H1 (cell line): ENCODE measurements at regions of chr12 and their contacts with region 1.

Region 1: GRCh38 chr12:48957141-48958048 is at the start of gene ARF3:
- DNase-seq: peak; percentile 82 to 96
- H3K4me3 ChIP-seq: peak within 1 kb of the TSS; percentile 93 to 97 (median 94)
- H3K27ac ChIP-seq: peak within 1 kb of the TSS; percentile 86
- H3K4me1 ChIP-seq: peaks cover 5 to 14% (median 8%) of the 10 kb centered on the region in 4 experiments; a peak in 6 of 7 replicates
- H3K27me3 ChIP-seq: no peaks in the 10 kb centered on the region
- CTCF ChIP-seq: no peak
- EP300 ChIP-seq: peak in 1 of 2 experiments; percentile 58; a peak in 1 of 3 replicates
- POLR2A ChIP-seq: peak; percentile 56 to 60; a peak in 2 of 3 replicates
- RAD21 ChIP-seq: no peak
- total RNA-seq, gene ARF3: 250 and 251 TPM in 2 replicates

Region 2: DNA sequence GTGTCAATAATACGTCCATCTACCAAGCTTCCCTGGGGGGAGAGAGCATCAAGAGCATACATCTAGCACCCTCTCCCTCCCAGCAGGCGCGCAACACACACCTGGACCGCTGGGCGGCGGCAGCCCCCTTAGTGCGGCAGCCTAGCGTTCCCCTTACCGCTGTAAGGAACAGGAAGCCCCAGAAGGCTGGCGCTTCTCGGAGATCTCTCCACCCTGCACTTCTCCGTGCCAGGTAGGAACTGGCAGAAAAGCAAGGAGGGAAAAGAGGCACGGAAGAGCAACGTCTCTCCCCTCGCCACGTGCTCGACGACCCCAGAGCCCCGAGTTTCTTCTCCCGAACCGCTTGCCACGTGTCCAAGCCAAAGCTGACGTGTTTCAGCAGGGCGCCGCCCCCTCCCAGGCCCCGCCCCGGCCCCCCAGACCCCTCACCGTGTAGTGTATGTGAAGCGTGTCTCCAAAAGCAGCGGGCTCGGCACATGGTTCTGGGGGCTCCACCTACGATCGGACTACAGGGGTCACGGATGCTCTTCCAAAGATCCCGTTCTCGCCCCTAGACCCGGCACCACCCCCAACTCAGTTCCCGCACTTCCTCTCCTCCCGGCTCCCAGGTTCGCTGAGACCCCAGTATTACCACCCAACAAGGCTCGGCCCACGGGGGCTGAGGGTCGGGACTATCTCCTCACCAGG is 32.6 kb before region 1 on chr12:
- CTCF ChIA-PET with region 1: interaction called, 280 read pairs
- POLR2A ChIA-PET with region 1: interaction called, 10 read pairs
- DNase-seq: peak; percentile 29 to 79
- H3K4me3 ChIP-seq: peak overlapping the region; percentile 61 to 86 (median 70)
- H3K27ac ChIP-seq: peak overlapping the region; percentile 55
- H3K4me1 ChIP-seq: peaks cover 0 to 14% (median 4%) of the 10 kb centered on the region in 4 experiments; a peak in 4 of 7 replicates
- H3K27me3 ChIP-seq: no peaks in the 10 kb centered on the region; a peak in 1 of 7 replicates
- CTCF ChIP-seq: peak; percentile 64 to 71 (median 69)
- EP300 ChIP-seq: no peak
- POLR2A ChIP-seq: peak; percentile 27 to 44; a peak in 2 of 3 replicates
- RAD21 ChIP-seq: peak; percentile 46 to 61

Region 3: DNA sequence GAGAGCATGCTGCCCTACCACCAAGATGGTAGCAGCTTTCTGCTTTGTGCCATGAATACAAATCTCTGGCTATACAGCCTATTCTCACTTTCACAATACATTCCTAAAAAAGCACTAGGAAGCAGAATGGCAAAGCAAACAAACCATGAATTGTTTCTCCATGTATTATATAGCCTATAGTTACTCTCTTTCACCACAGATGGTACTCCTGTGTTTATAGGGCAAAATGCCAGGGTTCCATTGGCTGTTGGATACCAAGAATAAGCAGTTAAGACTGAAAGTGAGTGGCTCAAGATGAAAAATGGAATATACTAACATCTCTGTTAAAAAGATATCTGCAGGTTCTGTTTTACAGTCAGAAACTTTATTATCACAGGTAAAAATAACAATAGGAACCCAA is 11.2 kb before region 1 on chr12:
- CTCF ChIA-PET with region 1: interaction called, 7 read pairs
- POLR2A ChIA-PET with region 1: interaction called, 77 read pairs
- DNase-seq: no peak
- H3K4me3 ChIP-seq: no peak overlapping the region
- H3K27ac ChIP-seq: no peak overlapping the region
- H3K4me1 ChIP-seq: no peaks in the 10 kb centered on the region; a peak in 1 of 7 replicates
- H3K27me3 ChIP-seq: no peaks in the 10 kb centered on the region
- CTCF ChIP-seq: no peak
- EP300 ChIP-seq: no peak
- POLR2A ChIP-seq: no peak
- RAD21 ChIP-seq: no peak

Region 4: GRCh38 chr12:48969833-48970701 is 12.7 kb after region 1 on chr12:
- CTCF ChIA-PET with region 1: interaction called, 15 read pairs
- POLR2A ChIA-PET with region 1: interaction called, 65 read pairs
- DNase-seq: peak in 1 of 2 experiments; percentile 69
- H3K4me3 ChIP-seq: peak overlapping the region; percentile 11 to 56 (median 32); a peak in 7 of 8 replicates
- H3K27ac ChIP-seq: no peak overlapping the region
- H3K4me1 ChIP-seq: peaks cover 28 to 49% (median 42%) of the 10 kb centered on the region in 4 experiments
- H3K27me3 ChIP-seq: peaks cover 48 to 81% (median 79%) of the 10 kb centered on the region in 4 experiments
- CTCF ChIP-seq: peak in 1 of 3 experiments; percentile 8; a peak in 1 of 4 replicates
- EP300 ChIP-seq: no peak
- POLR2A ChIP-seq: no peak
- RAD21 ChIP-seq: no peak

Region 5: DNA sequence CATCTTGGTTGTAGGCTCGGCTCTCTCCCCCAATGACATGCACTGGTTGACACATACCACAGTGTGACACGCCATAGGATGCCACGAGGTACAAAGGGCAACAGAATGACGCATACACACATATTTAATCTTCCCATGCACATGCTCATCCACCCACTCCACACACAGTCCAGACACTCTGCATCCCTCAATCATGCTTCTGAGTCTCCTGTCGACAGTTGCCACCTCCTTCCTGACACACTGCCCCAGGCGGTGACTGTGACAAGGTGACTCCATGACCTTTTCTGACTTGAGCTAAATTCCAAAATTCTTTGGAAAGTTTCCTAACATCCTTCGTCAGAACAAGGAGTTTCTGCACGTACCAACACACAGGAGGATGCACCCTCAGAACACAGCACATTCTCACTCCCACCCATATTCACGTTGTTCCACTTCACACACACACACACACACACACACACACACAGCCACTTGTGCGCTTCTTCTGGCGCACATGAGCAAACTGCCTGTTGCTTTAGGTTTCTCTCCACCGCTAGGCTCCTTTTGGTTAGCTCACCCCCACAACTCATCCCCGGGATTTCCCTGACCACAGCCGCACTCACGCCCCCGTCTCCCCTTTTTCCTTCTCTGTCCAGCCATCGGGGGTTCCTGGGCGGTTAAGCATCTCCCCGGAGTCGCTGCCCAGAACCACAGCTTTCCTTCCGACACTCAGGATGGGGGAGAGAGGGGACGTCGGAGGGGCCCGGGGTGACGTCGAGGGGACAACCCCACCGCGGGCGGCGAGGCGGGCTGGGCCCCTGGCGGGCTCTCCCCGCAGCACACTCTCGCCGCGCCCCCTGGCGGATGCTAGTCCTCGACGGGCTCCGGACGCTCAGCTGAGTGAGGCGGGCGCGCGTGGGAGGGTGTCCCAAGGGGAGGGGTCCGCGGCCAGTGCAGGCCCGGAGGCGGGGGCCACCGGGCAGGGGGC is 20.2 kb after region 1 on chr12:
- CTCF ChIA-PET with region 1: interaction called, 1,336 read pairs
- POLR2A ChIA-PET with region 1: interaction called, 5 read pairs
- DNase-seq: peak in 1 of 2 experiments; percentile 88
- H3K4me3 ChIP-seq: peak overlapping the region in 3 of 4 experiments; percentile 16 to 57 (median 26); a peak in 4 of 8 replicates
- H3K27ac ChIP-seq: no peak overlapping the region
- H3K4me1 ChIP-seq: peaks cover 0 to 39% (median 30%) of the 10 kb centered on the region in 4 experiments; a peak in 6 of 7 replicates
- H3K27me3 ChIP-seq: peaks cover 78 to 99% (median 96%) of the 10 kb centered on the region in 4 experiments
- CTCF ChIP-seq: peak in 2 of 3 experiments; percentile 63 to 99; a peak in 3 of 4 replicates
- EP300 ChIP-seq: no peak
- POLR2A ChIP-seq: no peak
- RAD21 ChIP-seq: peak; percentile 18 to 36; a peak in 3 of 4 replicates

Region 6: DNA sequence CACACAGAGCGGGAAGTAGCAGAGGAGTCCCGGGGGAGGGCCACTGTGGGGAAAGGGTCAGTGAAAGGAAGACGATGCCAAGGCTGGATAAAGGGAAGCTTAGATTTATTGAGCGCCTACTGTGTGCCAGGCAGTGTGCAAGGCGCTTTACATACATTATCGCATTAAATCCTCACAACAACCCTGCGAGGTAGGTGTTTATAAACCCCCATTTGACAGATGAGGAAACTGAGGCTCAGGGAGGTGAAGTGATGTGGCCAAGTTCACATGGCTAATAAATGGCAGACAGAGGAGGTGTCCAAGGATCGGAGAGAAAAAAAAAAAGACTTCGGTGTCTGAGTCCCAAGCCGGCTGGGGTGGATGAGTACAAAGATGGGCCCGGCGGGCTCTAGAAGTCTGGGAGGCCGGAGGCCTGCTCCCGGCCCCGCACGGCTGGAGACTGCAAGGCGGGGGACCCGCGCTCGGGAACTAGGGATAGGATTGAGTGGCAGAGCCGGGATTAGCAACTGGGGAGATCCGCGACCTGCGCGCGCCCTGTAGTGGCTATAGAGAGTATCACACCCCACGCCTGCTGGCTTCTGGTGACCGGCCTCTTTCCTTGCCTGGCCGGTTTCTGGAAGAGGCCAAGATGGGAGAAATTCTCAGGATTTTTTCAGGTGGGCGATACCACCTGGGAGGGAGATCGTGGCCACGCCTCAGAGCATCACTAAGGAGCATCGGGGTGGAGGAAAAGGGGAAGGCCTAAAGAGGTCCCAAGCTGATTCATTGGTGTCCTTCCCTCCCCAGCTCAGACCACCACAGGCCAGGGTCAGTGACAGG is 37.9 kb after region 1 on chr12:
- CTCF ChIA-PET with region 1: interaction called, 1,336 read pairs
- POLR2A ChIA-PET with region 1: interaction called, 6 read pairs
- DNase-seq: peak in 1 of 2 experiments; percentile 92
- H3K4me3 ChIP-seq: peak overlapping the region in 1 of 4 experiments; percentile 40; a peak in 2 of 8 replicates
- H3K27ac ChIP-seq: no peak overlapping the region
- H3K4me1 ChIP-seq: peaks cover 9 to 29% (median 16%) of the 10 kb centered on the region in 4 experiments
- H3K27me3 ChIP-seq: peaks cover 50 to 74% (median 70%) of the 10 kb centered on the region in 4 experiments
- CTCF ChIP-seq: peak; percentile 74 to 91 (median 76)
- EP300 ChIP-seq: peak in 1 of 2 experiments; percentile 47; a peak in 1 of 3 replicates
- POLR2A ChIP-seq: no peak
- RAD21 ChIP-seq: peak; percentile 80 to 83

Region 7: DNA sequence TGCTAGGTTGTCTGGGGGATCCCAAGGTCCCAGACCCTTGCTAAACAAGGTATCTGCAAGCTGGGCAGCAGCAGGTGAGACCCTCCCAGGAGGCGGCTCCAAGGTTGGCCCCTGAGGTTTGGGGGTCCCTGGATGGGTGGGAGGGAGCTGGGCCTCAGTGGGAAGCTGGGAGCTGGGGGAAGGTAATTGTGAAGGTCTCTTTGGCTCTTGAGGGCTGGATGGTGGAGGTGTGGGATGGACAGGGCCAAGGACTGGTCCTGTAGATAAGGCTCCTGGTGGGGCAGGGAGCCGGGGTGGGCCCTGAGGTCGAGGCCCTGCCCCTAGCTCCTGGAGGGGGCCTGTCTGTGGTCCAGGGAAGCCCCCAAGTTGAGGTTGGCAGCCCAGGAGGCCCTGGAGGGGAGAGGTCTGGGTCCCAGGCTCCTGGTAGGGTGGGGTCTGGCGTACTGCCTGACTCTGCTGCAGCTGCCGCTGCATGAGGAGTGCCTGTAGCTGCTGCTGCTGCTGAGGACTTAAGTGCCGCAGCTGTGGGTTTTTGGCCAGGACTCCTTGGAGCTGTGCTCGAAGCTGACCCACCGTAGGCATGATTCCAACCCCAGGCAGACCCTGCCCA is 74.3 kb after region 1 on chr12:
- CTCF ChIA-PET with region 1: no interaction called
- POLR2A ChIA-PET with region 1: no interaction called
- DNase-seq: no peak
- H3K4me3 ChIP-seq: no peak overlapping the region
- H3K27ac ChIP-seq: no peak overlapping the region
- H3K4me1 ChIP-seq: no peaks in the 10 kb centered on the region
- H3K27me3 ChIP-seq: no peaks in the 10 kb centered on the region
- CTCF ChIP-seq: no peak
- EP300 ChIP-seq: no peak
- POLR2A ChIP-seq: no peak
- RAD21 ChIP-seq: no peak